Aorta (tissue), 5 donors: ENCODE measurements at regions of chr22 and their contacts with region 1.

Region 1: GRCh38 chr22:38569972-38570778 is at the start of gene DMC1:
- DNase-seq: peak; percentile 96 to 99
- ATAC-seq: peak; percentile 97
- H3K4me3 ChIP-seq: peak within 1 kb of the TSS; percentile 27 to 51
- H3K27ac ChIP-seq: peak within 1 kb of the TSS; percentile 76 to 90
- H3K4me1 ChIP-seq: no peaks in the 10 kb centered on the region
- H3K27me3 ChIP-seq: no peaks in the 10 kb centered on the region
- total RNA-seq, gene DMC1: 1.5 TPM

Region 2: GRCh38 chr22:38056969-38057891 is 512.9 kb before region 1 on chr22 and contains the start of gene PICK1:
- intact Hi-C with region 1: loop called (anchors 2 kb)
- DNase-seq: peak; percentile 93 to 96
- ATAC-seq: peak; percentile 92
- H3K4me3 ChIP-seq: peak within 1 kb of the TSS; percentile 17 to 54
- H3K27ac ChIP-seq: peak within 1 kb of the TSS; percentile 53 to 93
- H3K4me1 ChIP-seq: no peaks in the 10 kb centered on the region
- H3K27me3 ChIP-seq: no peaks in the 10 kb centered on the region
- total RNA-seq, gene PICK1: 25.0 to 26.4 TPM

Region 3: GRCh38 chr22:38412435-38413084 is 157.6 kb before region 1 on chr22:
- intact Hi-C with region 1: loop called (anchors 2 to 5 kb)
- DNase-seq: peak in 1 of 2 donors; percentile 77
- ATAC-seq: peak; percentile 61
- H3K4me3 ChIP-seq: no peak overlapping the region
- H3K27ac ChIP-seq: no peak overlapping the region
- H3K4me1 ChIP-seq: no peaks in the 10 kb centered on the region
- H3K27me3 ChIP-seq: no peaks in the 10 kb centered on the region

Region 4: DNA sequence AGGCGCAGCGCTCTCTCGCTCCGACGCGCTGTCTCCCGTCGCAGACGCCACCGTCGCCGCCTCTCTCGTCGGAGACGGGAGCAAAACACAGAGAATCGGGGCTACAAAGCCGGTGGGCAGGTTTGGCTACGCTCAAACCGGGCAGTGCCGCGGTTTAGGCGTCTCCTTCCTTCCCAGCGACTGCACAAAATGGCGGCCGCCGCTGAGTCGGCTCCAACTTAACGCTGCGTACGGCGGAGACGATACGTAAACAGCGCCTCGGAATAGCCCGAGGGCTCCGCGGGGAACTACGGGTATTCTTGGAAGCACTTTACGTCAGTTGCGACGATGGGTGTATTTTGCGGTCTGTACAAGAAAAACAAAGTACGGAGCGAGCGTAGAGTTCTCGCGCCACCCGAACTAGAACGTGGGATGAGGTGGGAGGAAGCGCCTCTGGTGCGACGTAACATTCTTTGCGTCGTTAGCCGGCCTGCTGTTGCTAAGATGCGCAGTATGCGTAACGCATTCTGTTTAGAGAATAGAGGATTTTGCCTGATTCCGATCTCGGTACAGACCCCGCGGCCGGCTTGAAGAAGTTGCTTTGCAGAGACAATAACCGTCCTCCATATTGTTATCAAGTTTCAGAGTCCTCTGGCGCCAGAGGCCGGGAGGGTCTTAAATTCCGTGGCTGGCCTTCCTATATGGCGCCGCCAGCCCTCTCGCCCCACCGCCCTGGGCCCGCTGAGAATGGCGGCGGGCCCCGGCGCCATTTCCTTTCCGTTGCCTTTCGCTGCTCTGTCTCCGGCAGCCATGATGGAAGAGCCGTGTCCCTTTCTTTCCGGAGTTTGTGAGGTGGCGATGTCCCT is 63.8 kb before region 1 on chr22 and contains the start of gene DDX17:
- intact Hi-C with region 1: loop called (anchors 1 to 5 kb)
- DNase-seq: peak; percentile 95 to 97
- ATAC-seq: peak; percentile 97
- H3K4me3 ChIP-seq: peak within 1 kb of the TSS; percentile 59 to 76
- H3K27ac ChIP-seq: peak within 1 kb of the TSS; percentile 93 to 99
- H3K4me1 ChIP-seq: no peaks in the 10 kb centered on the region
- H3K27me3 ChIP-seq: no peaks in the 10 kb centered on the region
- total RNA-seq, gene DDX17: 377 to 555 TPM